ENCODE measurements at regions of chr20 and their contacts with region 1.

Region 1: GRCh38 chr20:52312132-52312729 is 120.7 kb upstream of the ZFP64 start:
- DNase-seq: peak; percentile 16
- H3K4me3 ChIP-seq: no peak overlapping the region
- H3K27ac ChIP-seq: no peak overlapping the region
- H3K27me3 ChIP-seq: no peaks in the 10 kb centered on the region
- CTCF ChIP-seq: peak; percentile 80

Region 2: DNA sequence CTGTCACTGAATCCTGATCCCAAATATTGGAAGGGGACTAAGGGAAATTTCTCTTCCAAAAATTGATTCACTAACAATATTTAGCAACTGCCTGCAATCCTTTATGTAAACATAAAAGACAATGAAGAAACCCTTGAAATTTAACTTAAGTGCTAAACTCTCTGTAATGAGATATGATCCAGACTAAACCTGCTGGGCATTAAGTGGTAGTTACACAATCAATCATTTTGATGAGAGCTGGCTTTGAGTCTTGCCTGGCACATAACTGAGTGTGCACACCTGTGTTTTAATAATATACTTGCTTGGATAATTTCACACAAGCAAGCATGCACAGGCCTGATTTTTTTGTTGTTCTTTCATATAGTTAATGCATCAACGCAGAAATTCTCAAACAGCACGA is 110.8 kb before region 1 on chr20:
- CTCF ChIA-PET with region 1: no interaction called
- POLR2A ChIA-PET with region 1: no interaction called
- DNase-seq: no peak
- H3K4me3 ChIP-seq: no peak overlapping the region
- H3K27ac ChIP-seq: no peak overlapping the region
- H3K27me3 ChIP-seq: peaks cover 5% of the 10 kb centered on the region
- CTCF ChIP-seq: no peak

Region 3: DNA sequence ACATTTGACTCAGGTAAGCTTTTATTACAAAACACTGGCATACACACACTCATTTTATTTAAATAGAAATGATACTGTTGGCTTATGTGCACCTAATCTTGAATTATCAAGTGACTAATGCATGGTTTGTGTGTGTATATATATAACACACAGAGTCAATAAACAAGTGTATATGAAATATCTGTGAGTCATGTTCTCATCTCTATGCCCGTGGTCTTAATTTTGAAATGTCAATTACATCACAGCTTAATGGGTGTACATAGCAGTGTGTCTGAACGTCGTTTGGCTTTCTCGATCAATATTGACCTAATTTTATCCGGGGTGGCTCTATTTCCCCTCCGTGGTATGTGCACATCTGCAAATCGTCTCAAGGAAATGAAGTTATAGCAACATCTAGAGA is 16.7 kb before region 1 on chr20:
- CTCF ChIA-PET with region 1: interaction called, 37 read pairs
- POLR2A ChIA-PET with region 1: no interaction called
- DNase-seq: no peak
- H3K4me3 ChIP-seq: no peak overlapping the region
- H3K27ac ChIP-seq: no peak overlapping the region
- H3K27me3 ChIP-seq: no peaks in the 10 kb centered on the region
- CTCF ChIP-seq: no peak

Region 4: DNA sequence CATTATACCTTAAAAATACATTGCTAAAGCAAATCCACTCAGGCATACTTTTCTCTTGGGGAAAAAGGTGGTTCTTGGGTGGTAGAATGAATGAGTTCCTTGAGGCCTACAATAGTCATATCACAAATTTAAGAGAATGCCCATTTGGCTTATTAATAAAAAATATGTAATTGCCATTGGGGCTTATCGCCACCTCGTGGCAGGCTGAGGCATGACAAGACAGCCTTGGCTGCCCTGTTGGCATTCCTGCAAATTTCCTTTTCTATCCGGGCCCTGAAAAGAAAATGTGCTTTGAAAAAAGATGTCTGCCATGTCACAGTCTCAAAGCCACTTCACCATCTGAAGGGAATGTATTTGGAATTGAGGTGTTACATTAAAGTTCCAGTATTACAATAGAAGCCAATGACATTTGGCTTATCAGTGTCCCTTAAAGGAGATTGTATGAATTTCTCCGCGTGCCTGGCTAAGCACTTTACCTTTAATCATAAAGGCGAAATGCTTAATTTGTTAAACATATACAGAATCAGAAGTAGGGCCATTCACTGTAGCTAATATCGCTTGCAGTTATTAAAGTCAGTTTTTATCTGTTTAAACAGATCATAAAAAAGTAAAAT is 67.6 kb after region 1 on chr20:
- CTCF ChIA-PET with region 1: interaction called, 10 read pairs
- POLR2A ChIA-PET with region 1: no interaction called
- DNase-seq: no peak
- H3K4me3 ChIP-seq: no peak overlapping the region
- H3K27ac ChIP-seq: no peak overlapping the region
- H3K27me3 ChIP-seq: no peaks in the 10 kb centered on the region
- CTCF ChIP-seq: peak; percentile 95

Region 5: DNA sequence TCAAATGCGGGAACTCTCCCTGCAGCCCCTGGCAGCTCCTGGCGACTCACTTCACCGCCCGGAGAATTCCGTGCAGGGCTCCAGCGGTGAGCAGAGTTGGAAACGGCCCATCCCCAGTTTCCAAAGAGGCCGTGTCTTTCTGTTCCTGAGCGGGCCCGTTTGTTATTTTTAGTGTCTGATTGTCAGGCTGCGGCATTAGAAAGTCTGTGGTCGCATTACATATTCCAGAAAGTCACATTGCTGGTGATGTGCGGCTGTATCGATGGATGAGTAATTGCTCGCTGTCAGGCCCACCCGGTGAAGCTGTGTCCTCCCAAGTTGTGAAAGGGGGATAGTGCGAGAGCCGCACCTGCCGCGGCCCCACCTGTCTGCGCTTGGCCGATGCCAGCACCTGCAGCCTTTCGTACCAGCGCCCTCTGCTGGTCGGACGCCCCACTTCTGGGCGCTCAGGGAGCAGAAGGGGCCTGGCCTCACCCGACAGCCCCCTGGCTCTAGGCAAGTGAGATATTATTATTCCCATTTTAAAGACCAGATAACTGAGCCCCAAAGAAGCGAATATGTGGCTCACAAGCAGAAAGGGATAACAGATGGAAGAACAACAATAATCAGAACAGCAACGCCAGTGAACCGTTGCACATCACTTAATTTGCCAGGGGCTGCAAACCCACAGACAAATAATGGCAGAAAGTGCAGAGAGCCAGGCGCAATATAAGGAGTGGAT is 904.8 kb after region 1 on chr20:
- CTCF ChIA-PET with region 1: interaction called, 22 read pairs
- POLR2A ChIA-PET with region 1: no interaction called
- DNase-seq: no peak
- H3K4me3 ChIP-seq: no peak overlapping the region
- H3K27ac ChIP-seq: no peak overlapping the region
- H3K27me3 ChIP-seq: no peaks in the 10 kb centered on the region
- CTCF ChIP-seq: peak; percentile 73

Region 6: DNA sequence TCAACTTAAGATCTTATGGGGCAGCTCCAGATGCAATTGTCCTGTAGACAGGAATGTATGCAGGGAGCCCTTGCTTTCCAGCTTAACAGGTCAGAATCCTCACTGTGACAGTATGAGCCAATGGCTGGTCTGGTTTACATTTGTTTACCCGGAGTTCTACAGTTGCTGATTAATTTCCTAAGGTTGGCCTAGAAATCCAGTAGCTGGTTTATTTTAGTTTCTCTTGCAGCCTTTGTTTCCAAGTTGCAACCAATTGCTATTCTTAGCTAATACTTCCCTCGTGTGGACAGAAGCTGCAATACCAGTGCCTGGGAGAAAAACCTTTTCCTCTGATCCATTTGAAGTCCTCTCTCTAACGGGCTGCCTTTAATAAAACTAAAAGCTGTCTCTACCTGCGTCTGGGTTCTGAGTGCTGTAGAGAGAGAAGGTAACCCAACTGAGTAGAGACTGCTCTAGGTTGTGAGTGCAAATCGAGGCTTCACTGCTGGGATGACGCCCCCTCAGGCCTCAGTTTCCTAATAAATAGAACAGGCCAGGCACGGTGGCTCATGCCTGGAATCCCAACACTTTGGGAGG is 1235.5 kb after region 1 on chr20:
- CTCF ChIA-PET with region 1: interaction called, 70 read pairs
- POLR2A ChIA-PET with region 1: interaction called, 3 read pairs
- DNase-seq: peak; percentile 47
- H3K4me3 ChIP-seq: no peak overlapping the region
- H3K27ac ChIP-seq: no peak overlapping the region
- H3K27me3 ChIP-seq: no peaks in the 10 kb centered on the region
- CTCF ChIP-seq: peak; percentile 92